ENCODE measurements at regions of chr2 and their contacts with region 1.

Region 1: GRCh38 chr2:118128826-118129225 is 40.6 kb downstream of the INSIG2 start:
- DNase-seq: no peak
- H3K4me3 ChIP-seq: no peak overlapping the region
- H3K27ac ChIP-seq: no peak overlapping the region
- H3K27me3 ChIP-seq: peaks cover 0 to 23% (median 0%) of the 10 kb centered on the region in 45 donors
- CTCF ChIP-seq: no peak

Region 2: DNA sequence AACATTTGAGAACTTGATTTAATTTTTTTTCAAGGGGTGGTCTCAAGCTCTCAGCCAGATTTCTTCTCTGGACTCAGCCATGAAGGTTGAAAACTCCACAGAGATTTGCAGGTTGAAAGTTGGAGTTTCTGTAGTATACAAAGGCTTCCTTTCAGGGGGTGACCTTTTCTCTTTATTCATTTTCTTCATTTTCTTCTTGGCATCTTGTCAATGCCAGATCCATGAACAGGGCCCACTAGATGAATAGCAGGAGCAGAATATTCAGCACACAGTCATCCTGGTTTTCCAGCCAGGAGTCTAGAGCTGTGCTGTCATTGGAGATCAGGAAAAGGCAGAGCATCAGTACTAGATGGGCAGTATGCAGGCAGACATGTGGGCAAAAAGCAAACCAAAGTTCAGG is 21.5 kb after region 1 on chr2:
- intact Hi-C with region 1: loop called in 1 of 2 experiments (anchors 1 kb)
- DNase-seq: no peak
- H3K4me3 ChIP-seq: no peak overlapping the region
- H3K27ac ChIP-seq: no peak overlapping the region
- H3K27me3 ChIP-seq: peaks cover 0 to 20% (median 0%) of the 10 kb centered on the region in 45 donors
- CTCF ChIP-seq: no peak